ENCODE measurements at regions of chr3 and their contacts with region 1.

Region 1: GRCh38 chr3:114152519-114153151 is 26.2 kb downstream of the DRD3 start:
- DNase-seq: peak; percentile 59 to 66 (median 64)
- ATAC-seq: peak; percentile 92
- H3K4me3 ChIP-seq: peak overlapping the region; percentile 23; the same call in 1 of the 2 replicates
- H3K27ac ChIP-seq: no peak overlapping the region
- H3K4me1 ChIP-seq: peaks cover 3 to 6% of the 10 kb centered on the region in 2 experiments; a peak in 2 of 5 replicates
- H3K27me3 ChIP-seq: peaks cover 0 to 3% of the 10 kb centered on the region in 2 experiments; a peak in 2 of 5 replicates
- CTCF ChIP-seq: peak; percentile 67 to 81 (median 76)
- EP300 ChIP-seq: no peak
- POLR2A ChIP-seq: no peak
- RAD21 ChIP-seq: peak; percentile 66 to 72

Region 2: DNA sequence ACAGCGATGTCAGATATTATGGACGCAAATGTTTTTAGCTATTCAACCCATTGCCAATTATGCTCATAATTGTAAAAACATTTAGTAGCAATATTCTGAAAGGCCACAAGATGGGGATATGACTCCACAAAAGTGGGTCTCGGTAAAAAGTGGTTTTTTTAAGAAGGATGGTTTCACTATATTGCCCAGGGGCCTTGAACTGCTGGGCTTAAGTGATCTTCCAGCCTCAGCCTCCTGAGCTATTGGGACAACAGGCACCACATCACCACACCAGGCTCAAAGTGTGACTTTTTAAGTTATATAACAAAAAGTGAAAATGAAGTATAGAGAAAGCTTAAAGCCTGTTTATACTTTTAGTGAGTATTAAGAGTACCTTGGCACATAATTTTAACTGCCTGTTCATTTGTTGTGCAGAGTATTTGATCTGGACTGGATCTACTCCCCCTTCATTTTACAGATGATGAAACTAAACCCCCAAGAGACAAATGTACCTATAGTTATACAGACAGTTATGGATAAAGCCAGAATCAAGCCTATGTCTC is 416.0 kb before region 1 on chr3:
- CTCF ChIA-PET with region 1: no interaction called
- POLR2A ChIA-PET with region 1: no interaction called
- in situ Hi-C with region 1: no loop called
- intact Hi-C with region 1: loop called (anchors 10 kb)
- DNase-seq: peak in 2 of 4 experiments; percentile 27 to 54
- ATAC-seq: peak; percentile 73
- H3K4me3 ChIP-seq: no peak overlapping the region
- H3K27ac ChIP-seq: peak overlapping the region; percentile 19; the same call in 1 of the 3 replicates
- H3K4me1 ChIP-seq: peaks cover 0 to 10% of the 10 kb centered on the region in 2 experiments; a peak in 2 of 5 replicates
- H3K27me3 ChIP-seq: no peaks in the 10 kb centered on the region
- CTCF ChIP-seq: peak; percentile 35 to 68 (median 47); a peak in 4 of 6 replicates
- EP300 ChIP-seq: no peak
- POLR2A ChIP-seq: no peak
- RAD21 ChIP-seq: peak; percentile 58 to 62

Region 3: DNA sequence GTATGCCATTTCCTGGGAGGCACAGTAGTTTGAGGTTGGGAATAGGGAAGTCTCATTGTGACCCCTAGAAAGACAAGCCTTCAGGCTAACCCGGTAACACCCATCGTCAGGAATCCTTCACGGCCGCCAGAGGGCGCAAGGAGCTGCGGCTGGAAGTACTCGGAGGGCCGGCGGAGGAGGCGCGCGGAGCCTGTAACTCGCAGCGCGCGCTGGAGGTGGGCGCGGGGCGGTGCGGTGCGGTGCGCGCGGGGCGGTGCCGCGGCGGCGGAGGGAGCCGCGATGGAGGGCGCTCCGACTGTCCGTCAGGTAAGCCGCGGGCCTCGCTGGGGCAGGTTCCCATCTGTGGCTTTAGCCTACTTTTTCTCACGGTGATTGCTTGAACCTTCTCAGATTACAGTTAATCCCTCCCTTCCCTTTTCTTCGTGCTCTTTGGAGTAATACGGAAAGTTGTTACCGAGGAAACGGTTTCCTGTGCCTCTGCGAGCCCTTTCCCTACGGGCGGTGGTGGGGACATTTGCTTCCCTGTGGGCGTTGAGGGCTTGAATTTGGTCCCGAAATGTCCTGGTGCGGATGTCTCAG is 313.9 kb before region 1 on chr3 and contains the start of gene GRAMD1C:
- CTCF ChIA-PET with region 1: no interaction called
- POLR2A ChIA-PET with region 1: no interaction called
- in situ Hi-C with region 1: no loop called
- intact Hi-C with region 1: loop called (anchors 10 kb)
- DNase-seq: peak; percentile 68 to 82 (median 71)
- ATAC-seq: peak; percentile 100
- H3K4me3 ChIP-seq: peak within 1 kb of the TSS; percentile 35
- H3K27ac ChIP-seq: no peak within 1 kb of the TSS
- H3K4me1 ChIP-seq: peaks cover 0 to 5% of the 10 kb centered on the region in 2 experiments; a peak in 1 of 5 replicates
- H3K27me3 ChIP-seq: peaks cover 0 to 6% of the 10 kb centered on the region in 2 experiments; a peak in 2 of 5 replicates
- CTCF ChIP-seq: peak; percentile 63 to 83 (median 75)
- EP300 ChIP-seq: no peak
- POLR2A ChIP-seq: no peak
- RAD21 ChIP-seq: peak; percentile 19 to 61; a peak in 2 of 4 replicates
- polyA plus RNA-seq, gene GRAMD1C: not detected

Region 4: GRCh38 chr3:114285648-114286230 is 133.1 kb after region 1 on chr3:
- CTCF ChIA-PET with region 1: no interaction called
- POLR2A ChIA-PET with region 1: no interaction called
- in situ Hi-C with region 1: no loop called
- intact Hi-C with region 1: no loop called
- DNase-seq: no peak
- ATAC-seq: no peak
- H3K4me3 ChIP-seq: no peak overlapping the region
- H3K27ac ChIP-seq: no peak overlapping the region
- H3K4me1 ChIP-seq: 0 out of 5 replicates have a peak, but pooled peaks cover 0 to under 1% of the 10 kb centered on the region in 2 experiments
- H3K27me3 ChIP-seq: no peaks in the 10 kb centered on the region
- CTCF ChIP-seq: no peak
- EP300 ChIP-seq: no peak
- POLR2A ChIP-seq: no peak
- RAD21 ChIP-seq: no peak

Region 5: GRCh38 chr3:114299421-114299820 is 146.8 kb after region 1 on chr3:
- CTCF ChIA-PET with region 1: no interaction called
- POLR2A ChIA-PET with region 1: no interaction called
- in situ Hi-C with region 1: no loop called
- intact Hi-C with region 1: loop called (anchors 5 kb)
- DNase-seq: peak; percentile 6 to 23 (median 12)
- ATAC-seq: peak; percentile 74; the same call in 2 of the 3 replicates
- H3K4me3 ChIP-seq: no peak overlapping the region
- H3K27ac ChIP-seq: no peak overlapping the region
- H3K4me1 ChIP-seq: no peaks in the 10 kb centered on the region
- H3K27me3 ChIP-seq: no peaks in the 10 kb centered on the region
- CTCF ChIP-seq: peak in 2 of 3 experiments; percentile 25 to 44; a peak in 2 of 6 replicates
- EP300 ChIP-seq: no peak
- POLR2A ChIP-seq: no peak
- RAD21 ChIP-seq: peak in 1 of 2 experiments; percentile 37; a peak in 3 of 4 replicates

Region 6: DNA sequence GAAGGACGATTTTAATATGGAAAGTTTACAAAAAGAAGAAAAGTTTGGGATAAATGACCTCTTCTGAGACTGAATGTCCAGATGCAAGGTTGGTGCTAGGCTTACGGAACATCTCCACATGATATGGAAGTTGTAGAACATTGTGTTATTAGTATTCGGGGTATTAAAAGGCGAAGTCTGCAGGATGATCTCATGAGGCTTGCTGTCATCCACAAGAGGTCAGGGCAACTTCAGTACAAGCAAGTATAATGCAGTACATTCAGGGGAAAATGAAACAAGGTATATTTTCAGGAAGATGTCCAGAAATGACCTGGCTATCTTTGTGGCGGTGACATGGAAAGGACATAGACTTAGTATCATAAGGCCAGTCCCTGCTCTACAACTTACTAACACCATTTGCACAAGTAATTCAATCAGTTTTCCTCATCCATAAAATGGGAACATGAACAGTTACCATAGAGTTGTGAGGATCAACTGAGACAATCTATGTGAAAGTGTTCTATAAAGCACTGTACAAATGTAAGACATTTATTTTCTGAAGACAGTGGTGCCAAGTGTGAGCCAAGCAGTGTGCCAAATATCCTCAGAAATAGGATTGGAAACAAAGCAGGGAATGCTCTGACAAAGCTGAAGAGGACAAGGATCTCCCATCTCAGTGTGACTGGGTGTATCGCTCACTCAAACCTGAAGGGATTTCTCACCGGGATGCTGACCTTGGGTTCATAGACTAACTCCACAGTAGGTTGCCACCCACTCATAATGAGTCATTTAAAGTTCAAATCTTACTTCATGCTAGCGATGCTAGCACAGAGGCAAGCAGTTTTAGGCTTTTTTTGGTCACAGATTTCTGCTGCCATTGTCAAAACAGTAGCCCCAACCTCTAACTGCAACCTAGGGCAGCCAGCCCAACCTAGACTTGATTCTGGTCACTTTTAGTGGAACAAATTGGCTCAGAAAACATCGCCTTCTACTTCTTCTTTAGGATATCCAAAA is 259.5 kb after region 1 on chr3:
- CTCF ChIA-PET with region 1: no interaction called
- POLR2A ChIA-PET with region 1: no interaction called
- in situ Hi-C with region 1: loop called (anchors 5 kb)
- intact Hi-C with region 1: no loop called
- DNase-seq: no peak
- ATAC-seq: no peak
- H3K4me3 ChIP-seq: no peak overlapping the region
- H3K27ac ChIP-seq: no peak overlapping the region
- H3K4me1 ChIP-seq: no peaks in the 10 kb centered on the region
- H3K27me3 ChIP-seq: no peaks in the 10 kb centered on the region
- CTCF ChIP-seq: no peak
- EP300 ChIP-seq: no peak
- POLR2A ChIP-seq: no peak
- RAD21 ChIP-seq: no peak